Right lobe of liver (tissue), 6 donors: ENCODE measurements at regions of chr3 and their contacts with region 1.

Region 1: DNA sequence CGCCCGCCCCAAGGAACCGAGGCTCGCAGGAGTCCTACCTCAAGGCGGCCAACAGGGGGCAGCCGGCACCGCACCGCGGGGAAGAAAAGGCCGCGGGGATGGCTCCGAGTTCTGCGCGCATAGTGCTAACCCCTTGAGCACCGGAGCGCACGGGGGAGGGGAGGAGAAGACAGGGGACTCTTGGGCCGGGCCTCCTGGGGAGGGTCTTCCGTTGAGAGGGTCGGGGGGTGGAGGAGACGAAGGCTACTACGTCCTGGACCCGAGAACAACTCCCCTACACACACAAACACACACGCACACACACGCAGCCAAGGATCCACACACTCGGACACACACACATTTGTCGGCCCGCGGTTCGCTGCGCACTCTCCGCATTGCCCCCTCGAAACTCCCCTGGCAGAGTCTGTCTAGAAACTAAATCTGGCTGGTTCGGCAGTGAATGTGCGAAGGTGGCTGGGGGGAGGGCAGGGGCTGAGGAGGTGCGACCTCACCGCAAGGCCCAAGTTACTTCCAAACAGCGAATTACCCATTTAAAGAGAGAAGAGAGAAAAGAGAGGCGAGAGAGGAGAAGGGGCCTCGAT is 1.8 kb downstream of the WNT5A start:
- DNase-seq: peak; percentile 82 to 84 (median 84)
- ATAC-seq: peak; percentile 79 to 85 (median 84)
- H3K4me3 ChIP-seq: peak overlapping the region; percentile 63 to 85 (median 77)
- H3K27ac ChIP-seq: peak overlapping the region in 2 of 3 donors; percentile 55 to 88
- H3K4me1 ChIP-seq: no peaks in the 10 kb centered on the region
- H3K27me3 ChIP-seq: no peaks in the 10 kb centered on the region
- CTCF ChIP-seq: peak; percentile 42 to 82 (median 72)
- POLR2A ChIP-seq: no peak

Region 2: GRCh38 chr3:55746808-55747413 is 261.6 kb after region 1 on chr3:
- intact Hi-C with region 1: loop called in 1 of 2 experiments (anchors 10 kb)
- DNase-seq: no peak
- ATAC-seq: no peak
- H3K4me3 ChIP-seq: no peak overlapping the region
- H3K27ac ChIP-seq: no peak overlapping the region
- H3K4me1 ChIP-seq: no peaks in the 10 kb centered on the region
- H3K27me3 ChIP-seq: no peaks in the 10 kb centered on the region
- CTCF ChIP-seq: peak; percentile 38 to 52 (median 48)
- POLR2A ChIP-seq: no peak

Region 3: DNA sequence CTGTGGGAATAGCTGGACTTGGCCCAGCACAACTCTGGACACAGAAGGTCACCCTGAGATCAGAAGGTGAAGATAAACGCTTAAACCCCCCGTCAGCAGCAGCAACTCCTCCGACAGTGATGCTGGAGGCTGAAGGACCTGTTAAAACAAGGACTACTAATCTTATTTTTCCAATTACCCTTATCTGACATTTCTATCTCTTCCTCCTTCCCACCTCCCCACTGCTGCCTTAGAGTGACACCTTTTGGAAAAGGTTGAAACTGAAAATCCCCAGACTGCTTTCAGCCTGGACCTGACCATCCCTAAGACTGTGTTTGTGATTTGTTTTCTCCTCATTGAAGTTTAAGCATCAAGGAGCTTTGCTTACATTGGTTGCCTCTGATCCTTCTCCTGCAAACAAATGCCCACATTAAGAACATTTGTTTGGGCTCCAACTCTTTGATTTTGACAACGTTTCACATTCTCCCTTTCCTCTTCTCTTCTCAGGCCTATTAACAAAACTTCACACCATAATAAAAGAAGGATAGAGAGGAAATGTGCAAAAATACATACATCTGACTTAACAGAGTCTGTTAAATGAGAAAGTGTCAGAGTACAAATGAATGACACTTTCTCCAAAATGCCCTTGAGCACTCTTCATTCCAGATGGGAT is 412.4 kb after region 1 on chr3:
- intact Hi-C with region 1: loop called in 1 of 2 experiments (anchors 10 kb)
- DNase-seq: no peak
- ATAC-seq: peak in 1 of 4 donors; percentile 41
- H3K4me3 ChIP-seq: no peak overlapping the region
- H3K27ac ChIP-seq: no peak overlapping the region
- H3K4me1 ChIP-seq: peaks cover 0 to 2% (median 0%) of the 10 kb centered on the region in 4 donors
- H3K27me3 ChIP-seq: no peaks in the 10 kb centered on the region
- CTCF ChIP-seq: peak in 2 of 4 donors; percentile 23 to 30
- POLR2A ChIP-seq: no peak

Region 4: DNA sequence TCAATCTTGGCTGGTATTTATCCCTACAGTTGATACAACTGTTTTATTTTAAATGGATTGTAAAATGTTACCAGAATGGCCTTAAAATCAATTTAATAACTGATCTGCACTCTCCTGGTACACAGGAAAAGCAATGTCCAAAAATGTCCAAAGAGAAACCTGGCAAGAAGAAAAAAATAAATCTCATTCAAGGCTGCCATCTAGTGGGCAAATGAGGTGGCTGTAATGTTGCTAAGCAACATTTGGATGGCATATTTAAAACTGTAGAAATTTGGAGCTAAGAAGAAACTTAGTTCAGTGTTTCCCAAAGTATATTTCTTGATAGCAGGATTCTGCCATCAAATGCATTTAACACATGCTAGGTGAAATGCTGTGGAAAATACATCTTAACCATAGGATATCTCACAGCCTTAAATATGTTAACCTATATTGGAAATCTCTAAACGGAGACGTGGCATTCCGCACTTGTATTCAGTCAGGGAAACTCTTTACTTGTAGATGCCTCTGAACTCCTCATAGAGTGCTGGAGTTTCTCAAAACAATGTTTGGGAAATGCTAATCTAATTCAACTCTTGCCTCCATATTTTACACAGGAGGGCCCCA is 766.1 kb after region 1 on chr3:
- intact Hi-C with region 1: loop called in 1 of 2 experiments (anchors 10 kb)
- DNase-seq: no peak
- ATAC-seq: peak; percentile 75 to 82 (median 78)
- H3K4me3 ChIP-seq: no peak overlapping the region
- H3K27ac ChIP-seq: no peak overlapping the region
- H3K4me1 ChIP-seq: no peaks in the 10 kb centered on the region
- H3K27me3 ChIP-seq: no peaks in the 10 kb centered on the region
- CTCF ChIP-seq: peak; percentile 82 to 88 (median 84)
- POLR2A ChIP-seq: no peak